Activated CD8-positive, alpha-beta memory T cell treated with anti-CD3 and anti-CD28 coated beads, Interleukin-2, amount 10 ng/mL, durations not matched to agents 7 days and 5 days (primary cell): ENCODE measurements at regions of chr13 and their contacts with region 1.

Region 1: DNA sequence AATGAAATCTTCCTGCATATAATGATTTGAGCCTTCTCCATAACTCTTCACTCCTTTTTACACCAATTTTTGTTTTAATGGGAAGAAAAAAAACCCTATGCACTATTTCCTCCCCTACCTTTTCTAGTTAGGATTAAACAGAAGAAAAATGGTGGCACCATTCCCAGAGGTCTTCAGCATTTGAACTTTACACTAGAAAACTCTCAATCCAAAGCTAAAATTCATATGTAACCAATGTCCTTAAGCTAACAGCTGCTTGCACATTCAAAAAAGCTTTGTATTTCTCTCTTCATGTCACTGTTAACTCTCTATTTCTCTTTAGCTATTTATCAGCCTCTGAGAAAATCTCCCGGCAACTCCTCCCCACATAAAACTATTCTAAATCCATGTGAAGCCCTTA is 90.3 kb upstream of the UBL3 start:
- DNase-seq: no peak
- ATAC-seq: no peak
- H3K4me3 Mint-ChIP-seq: no peak overlapping the region
- H3K27ac Mint-ChIP-seq: no peak overlapping the region
- H3K4me1 Mint-ChIP-seq: peaks cover 29% of the 10 kb centered on the region
- H3K27me3 Mint-ChIP-seq: no peaks in the 10 kb centered on the region

Region 2: GRCh38 chr13:29713839-29714238 is 226.9 kb before region 1 on chr13:
- CTCF ChIA-PET with region 1: no interaction called
- DNase-seq: no peak
- ATAC-seq: no peak
- H3K4me3 Mint-ChIP-seq: no peak overlapping the region
- H3K27ac Mint-ChIP-seq: no peak overlapping the region
- H3K4me1 Mint-ChIP-seq: peaks cover 7% of the 10 kb centered on the region
- H3K27me3 Mint-ChIP-seq: peaks cover 34% of the 10 kb centered on the region

Region 3: GRCh38 chr13:29861694-29862110 is 79.0 kb before region 1 on chr13:
- CTCF ChIA-PET with region 1: no interaction called
- DNase-seq: no peak
- ATAC-seq: no peak
- H3K4me3 Mint-ChIP-seq: no peak overlapping the region
- H3K27ac Mint-ChIP-seq: no peak overlapping the region
- H3K4me1 Mint-ChIP-seq: peaks cover 4% of the 10 kb centered on the region
- H3K27me3 Mint-ChIP-seq: no peaks in the 10 kb centered on the region

Region 4: GRCh38 chr13:29923554-29924481 is 16.9 kb before region 1 on chr13:
- CTCF ChIA-PET with region 1: interaction called, 41 read pairs
- DNase-seq: peak; percentile 65
- ATAC-seq: peak; percentile 55
- H3K4me3 Mint-ChIP-seq: no peak overlapping the region
- H3K27ac Mint-ChIP-seq: no peak overlapping the region
- H3K4me1 Mint-ChIP-seq: peaks cover 30% of the 10 kb centered on the region
- H3K27me3 Mint-ChIP-seq: no peaks in the 10 kb centered on the region

Region 5: DNA sequence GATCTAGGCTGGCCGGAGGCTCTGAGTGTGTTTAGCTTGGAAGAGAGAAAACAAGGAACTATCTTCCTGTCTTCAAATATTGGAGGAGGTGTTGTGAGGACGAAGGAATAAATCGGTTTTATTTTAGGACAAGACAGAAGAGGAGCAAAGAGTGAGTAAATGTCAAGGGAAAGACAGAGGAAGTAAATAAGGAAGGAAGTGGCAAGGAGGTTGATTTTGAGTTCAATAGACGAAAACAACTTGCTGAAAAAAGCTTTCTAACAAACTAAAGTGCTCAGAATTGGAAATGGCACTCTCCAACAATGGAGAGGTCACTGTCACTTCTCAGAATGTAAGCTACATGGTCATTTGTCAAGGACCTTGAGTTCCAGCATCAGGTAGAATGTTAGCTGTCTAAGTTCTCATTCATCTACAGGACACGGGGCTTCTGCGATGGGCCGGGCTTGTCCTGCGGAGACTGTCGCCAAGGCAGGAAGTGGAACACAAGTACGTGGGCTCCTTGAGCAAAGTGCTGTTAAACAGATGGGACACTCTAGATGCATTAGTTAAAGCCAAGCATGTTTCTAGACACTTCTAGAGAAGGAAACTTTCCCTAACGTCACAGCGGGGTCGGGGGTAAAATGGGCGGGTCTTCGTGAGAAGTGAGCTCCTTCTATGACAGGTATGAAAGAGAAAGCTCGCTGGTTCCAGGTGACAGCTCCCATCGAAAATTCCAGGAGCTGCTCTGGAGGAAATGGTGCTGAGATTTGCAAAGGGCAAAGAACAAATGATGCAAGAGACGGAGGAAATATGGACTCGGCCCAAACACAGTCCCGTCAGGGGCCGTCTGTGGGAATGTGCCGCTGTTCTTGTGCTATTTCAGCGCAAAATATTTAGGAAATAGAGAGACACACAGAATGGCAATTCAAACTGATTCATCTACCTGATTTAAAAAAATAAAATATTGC is 13.6 kb after region 1 on chr13:
- CTCF ChIA-PET with region 1: interaction called, 23 read pairs
- DNase-seq: peak; percentile 78
- ATAC-seq: peak; percentile 97
- H3K4me3 Mint-ChIP-seq: peak overlapping the region; percentile 64
- H3K27ac Mint-ChIP-seq: peak overlapping the region; percentile 91
- H3K4me1 Mint-ChIP-seq: peaks cover 45% of the 10 kb centered on the region
- H3K27me3 Mint-ChIP-seq: no peaks in the 10 kb centered on the region